ENCODE measurements at regions of chr1 and their contacts with region 1.

Region 1: DNA sequence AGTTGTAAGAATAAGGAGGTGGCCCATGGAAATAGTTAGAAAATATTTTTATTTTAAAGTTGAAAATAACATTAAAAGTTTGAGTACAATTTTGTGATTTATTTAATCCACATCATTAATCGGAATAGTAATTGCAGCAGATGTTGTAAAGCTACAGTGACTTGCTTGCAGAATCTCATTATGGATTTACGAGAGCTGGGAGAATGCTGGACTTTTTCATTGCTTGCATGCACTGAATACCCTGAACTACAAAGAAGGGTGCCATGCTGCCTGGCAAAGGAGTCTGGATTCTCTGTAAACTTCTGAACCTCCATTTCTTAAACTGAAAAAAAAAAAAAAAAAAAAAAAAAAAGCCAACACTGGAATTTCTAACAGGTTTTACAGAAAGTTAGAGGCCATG is 26.5 kb downstream of the WDR64 start:
- DNase-seq: no peak
- H3K4me3 ChIP-seq: no peak overlapping the region
- H3K27ac ChIP-seq: no peak overlapping the region
- H3K4me1 ChIP-seq: no peaks in the 10 kb centered on the region
- H3K27me3 ChIP-seq: no peaks in the 10 kb centered on the region
- CTCF ChIP-seq: no peak

Region 2: DNA sequence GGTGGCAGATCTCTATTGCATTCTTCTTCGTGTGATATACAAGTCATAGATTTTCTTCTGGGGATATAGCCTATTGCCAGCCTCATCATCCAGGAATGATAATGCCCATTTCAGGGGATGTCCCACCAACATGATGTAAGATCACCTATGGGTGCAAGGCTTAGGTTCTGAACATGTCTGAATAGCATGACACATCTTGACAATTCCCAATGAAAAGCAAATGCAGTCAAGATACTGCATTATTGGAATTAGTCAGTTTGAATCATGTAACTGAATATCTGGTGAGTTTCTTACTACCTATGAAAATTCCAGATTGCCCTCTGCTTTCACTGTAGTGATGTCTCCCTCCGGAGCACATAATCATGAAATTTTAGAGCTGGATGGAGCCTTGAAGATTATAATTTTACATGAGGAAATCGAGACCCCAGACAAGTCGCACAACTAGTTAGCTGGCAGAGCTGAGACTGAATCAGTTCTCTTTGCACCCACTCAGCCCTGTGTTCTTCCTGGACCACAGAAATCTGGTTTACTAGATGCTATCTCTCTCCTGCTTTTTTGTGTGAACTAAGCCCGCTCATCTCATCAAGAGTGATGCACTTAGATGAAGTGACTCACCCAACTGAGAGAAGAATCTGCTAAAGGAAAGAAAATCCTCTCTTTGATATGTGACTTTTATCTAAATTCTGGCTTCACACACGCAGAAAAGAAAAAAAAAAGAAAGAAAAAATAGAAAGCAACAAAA is 38.5 kb after region 1 on chr1:
- CTCF ChIA-PET with region 1: no interaction called
- dilution Hi-C with region 1: no loop called
- in situ Hi-C with region 1: no loop called
- intact Hi-C with region 1: loop called (anchors 1 kb)
- DNase-seq: peak; percentile 49
- H3K4me3 ChIP-seq: no peak overlapping the region
- H3K27ac ChIP-seq: no peak overlapping the region
- H3K4me1 ChIP-seq: peaks cover 2% of the 10 kb centered on the region
- H3K27me3 ChIP-seq: no peaks in the 10 kb centered on the region
- CTCF ChIP-seq: no peak